ENCODE measurements at regions of chr12 and their contacts with region 1.

Region 1: GRCh38 chr12:100348657-100349454 is 8.0 kb upstream of the SLC17A8 start:
- DNase-seq: peak in 1 of 4 experiments; percentile 40
- ATAC-seq: peak; percentile 64
- H3K4me3 ChIP-seq: no peak overlapping the region
- H3K27ac ChIP-seq: no peak overlapping the region
- H3K4me1 ChIP-seq: no peaks in the 10 kb centered on the region
- H3K27me3 ChIP-seq: peaks cover 0 to 8% of the 10 kb centered on the region in 2 experiments; a peak in 2 of 5 replicates
- CTCF ChIP-seq: peak in 2 of 3 experiments; percentile 38 to 66; a peak in 3 of 6 replicates
- EP300 ChIP-seq: no peak
- POLR2A ChIP-seq: no peak
- RAD21 ChIP-seq: peak; percentile 67 to 75

Region 2: DNA sequence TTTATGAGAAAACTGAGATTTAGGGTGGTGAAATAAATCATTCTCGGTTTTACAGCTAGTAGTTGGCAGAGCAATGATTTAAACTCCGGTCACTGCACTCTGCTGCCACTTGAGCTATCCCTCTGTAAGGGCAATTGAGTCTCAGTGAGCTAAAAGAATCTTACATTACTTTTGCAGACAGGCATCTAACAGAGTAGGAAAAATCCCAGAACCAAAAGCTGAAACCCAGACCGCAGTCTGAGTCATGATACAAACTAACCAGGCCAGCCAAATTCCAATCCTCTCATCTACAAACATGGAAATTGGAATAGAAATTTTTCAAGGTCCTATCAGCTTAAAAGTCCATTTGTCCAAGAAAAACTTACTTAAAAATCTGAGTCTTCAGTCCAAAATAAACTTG is 437.8 kb before region 1 on chr12:
- CTCF ChIA-PET with region 1: no interaction called
- POLR2A ChIA-PET with region 1: no interaction called
- in situ Hi-C with region 1: no loop called
- intact Hi-C with region 1: no loop called
- DNase-seq: no peak
- ATAC-seq: no peak
- H3K4me3 ChIP-seq: no peak overlapping the region
- H3K27ac ChIP-seq: no peak overlapping the region
- H3K4me1 ChIP-seq: no peaks in the 10 kb centered on the region
- H3K27me3 ChIP-seq: no peaks in the 10 kb centered on the region
- CTCF ChIP-seq: no peak
- EP300 ChIP-seq: no peak
- POLR2A ChIP-seq: no peak
- RAD21 ChIP-seq: no peak

Region 3: GRCh38 chr12:100163416-100164152 is 185.3 kb before region 1 on chr12:
- CTCF ChIA-PET with region 1: no interaction called
- POLR2A ChIA-PET with region 1: no interaction called
- in situ Hi-C with region 1: no loop called
- intact Hi-C with region 1: no loop called
- DNase-seq: peak; percentile 54 to 80 (median 70)
- ATAC-seq: peak; percentile 100
- H3K4me3 ChIP-seq: no peak overlapping the region
- H3K27ac ChIP-seq: no peak overlapping the region
- H3K4me1 ChIP-seq: peaks cover 0 to 5% of the 10 kb centered on the region in 2 experiments; a peak in 3 of 5 replicates
- H3K27me3 ChIP-seq: peaks cover 5 to 10% of the 10 kb centered on the region in 2 experiments; a peak in 4 of 5 replicates
- CTCF ChIP-seq: peak in 2 of 3 experiments; percentile 3 to 27; a peak in 2 of 6 replicates
- EP300 ChIP-seq: no peak
- POLR2A ChIP-seq: no peak
- RAD21 ChIP-seq: peak in 1 of 2 experiments; percentile 27; a peak in 2 of 4 replicates

Region 4: DNA sequence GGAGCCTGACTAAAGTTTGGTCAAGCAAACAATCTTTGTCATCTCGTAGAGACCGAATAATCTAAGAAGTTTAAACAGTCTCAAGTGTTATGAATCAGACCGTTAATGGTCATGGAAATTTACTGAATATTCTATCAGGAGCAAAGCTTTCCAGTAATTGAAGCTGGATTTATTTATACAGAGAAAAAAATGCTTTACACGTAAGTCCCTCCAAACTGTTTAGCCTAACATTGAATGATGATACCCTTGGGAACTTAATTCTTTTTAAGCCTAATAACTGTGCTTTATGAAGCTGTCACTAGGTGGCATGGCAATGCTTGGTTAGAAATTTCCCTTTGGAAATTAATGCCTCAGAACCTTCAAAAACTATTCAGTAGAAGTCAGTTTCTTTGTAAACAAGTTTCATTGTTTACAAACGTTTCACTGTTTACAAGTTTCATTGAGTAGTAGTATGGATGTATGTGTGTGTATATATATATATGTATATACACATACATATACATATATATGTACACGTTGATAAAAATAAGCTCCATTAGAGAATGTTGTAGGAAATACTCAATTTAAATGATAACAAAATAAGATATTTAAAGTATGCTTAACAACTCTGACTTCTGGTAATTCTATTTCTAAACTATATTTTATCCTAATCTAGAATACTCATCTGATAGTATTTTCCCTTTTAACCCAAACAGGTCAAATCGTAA is 114.1 kb before region 1 on chr12:
- CTCF ChIA-PET with region 1: no interaction called
- POLR2A ChIA-PET with region 1: no interaction called
- in situ Hi-C with region 1: no loop called
- intact Hi-C with region 1: loop called (anchors 2 kb)
- DNase-seq: peak; percentile 20 to 52 (median 22)
- ATAC-seq: peak; percentile 87
- H3K4me3 ChIP-seq: no peak overlapping the region
- H3K27ac ChIP-seq: no peak overlapping the region
- H3K4me1 ChIP-seq: no peaks in the 10 kb centered on the region
- H3K27me3 ChIP-seq: no peaks in the 10 kb centered on the region
- CTCF ChIP-seq: peak; percentile 62 to 85 (median 66); a peak in 5 of 6 replicates
- EP300 ChIP-seq: no peak
- POLR2A ChIP-seq: no peak
- RAD21 ChIP-seq: peak; percentile 76 to 87

Region 5: GRCh38 chr12:100324498-100324897 is 24.4 kb before region 1 on chr12:
- CTCF ChIA-PET with region 1: no interaction called
- POLR2A ChIA-PET with region 1: no interaction called
- in situ Hi-C with region 1: no loop called
- intact Hi-C with region 1: no loop called
- DNase-seq: no peak
- ATAC-seq: no peak
- H3K4me3 ChIP-seq: no peak overlapping the region
- H3K27ac ChIP-seq: no peak overlapping the region
- H3K4me1 ChIP-seq: no peaks in the 10 kb centered on the region
- H3K27me3 ChIP-seq: no peaks in the 10 kb centered on the region
- CTCF ChIP-seq: no peak
- EP300 ChIP-seq: no peak
- POLR2A ChIP-seq: no peak
- RAD21 ChIP-seq: no peak

Region 6: DNA sequence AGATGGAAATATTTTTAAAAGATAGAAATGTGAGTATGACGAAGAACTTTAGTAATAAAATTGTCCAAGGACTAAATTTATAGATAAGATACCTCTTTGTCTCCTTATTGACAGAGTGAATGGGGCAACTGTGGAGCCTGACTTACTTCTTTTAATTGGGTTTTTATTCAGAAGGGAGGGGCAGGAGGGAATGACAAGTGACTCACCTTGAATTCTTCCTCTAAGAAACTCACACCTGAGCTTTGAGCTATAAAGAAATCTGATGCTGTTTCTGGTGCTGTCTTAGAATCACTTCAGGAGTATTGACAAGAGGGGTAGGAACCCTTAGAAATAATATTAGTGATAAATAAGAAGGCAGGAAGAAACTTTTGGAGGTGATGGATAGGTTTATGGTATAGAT is 125.8 kb after region 1 on chr12:
- CTCF ChIA-PET with region 1: no interaction called
- POLR2A ChIA-PET with region 1: no interaction called
- in situ Hi-C with region 1: no loop called
- intact Hi-C with region 1: loop called (anchors 5 kb)
- DNase-seq: no peak
- ATAC-seq: no peak
- H3K4me3 ChIP-seq: no peak overlapping the region
- H3K27ac ChIP-seq: no peak overlapping the region
- H3K4me1 ChIP-seq: no peaks in the 10 kb centered on the region
- H3K27me3 ChIP-seq: no peaks in the 10 kb centered on the region; a peak in 1 of 5 replicates
- CTCF ChIP-seq: no peak
- EP300 ChIP-seq: no peak
- POLR2A ChIP-seq: no peak
- RAD21 ChIP-seq: no peak

Region 7: DNA sequence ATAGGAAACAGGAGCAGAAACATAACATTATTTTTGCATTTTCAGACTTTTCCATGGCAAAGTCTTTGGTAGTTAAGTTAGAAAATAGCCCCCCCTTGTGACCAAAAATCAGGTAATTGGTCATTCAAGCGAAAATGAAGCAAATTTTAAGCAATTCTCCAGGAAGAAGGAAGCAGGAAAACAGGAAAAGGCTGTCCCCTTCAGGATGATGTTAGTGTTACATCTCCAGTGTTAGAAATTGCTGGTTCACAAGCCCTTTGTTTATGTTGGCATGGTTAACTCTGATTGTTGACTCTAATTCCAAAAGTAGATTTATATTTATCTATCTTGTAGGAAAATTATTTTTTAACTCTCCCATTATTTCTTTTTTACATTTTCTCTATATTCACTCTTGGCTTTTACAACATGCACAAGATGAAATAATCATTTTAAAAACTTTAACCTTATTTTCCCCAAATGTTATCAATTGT is 205.8 kb after region 1 on chr12:
- CTCF ChIA-PET with region 1: interaction called, 35 read pairs
- POLR2A ChIA-PET with region 1: no interaction called
- in situ Hi-C with region 1: loop called (anchors 10 kb)
- intact Hi-C with region 1: loop called (anchors 1 kb)
- DNase-seq: peak; percentile 53 to 79 (median 68)
- ATAC-seq: peak; percentile 95
- H3K4me3 ChIP-seq: no peak overlapping the region
- H3K27ac ChIP-seq: no peak overlapping the region
- H3K4me1 ChIP-seq: no peaks in the 10 kb centered on the region
- H3K27me3 ChIP-seq: no peaks in the 10 kb centered on the region
- CTCF ChIP-seq: peak; percentile 89 to 99 (median 91)
- EP300 ChIP-seq: no peak
- POLR2A ChIP-seq: no peak
- RAD21 ChIP-seq: peak; percentile 94 to 96

Region 8: GRCh38 chr12:100593490-100593889 is 244.6 kb after region 1 on chr12:
- CTCF ChIA-PET with region 1: no interaction called
- POLR2A ChIA-PET with region 1: no interaction called
- in situ Hi-C with region 1: no loop called
- intact Hi-C with region 1: no loop called
- DNase-seq: no peak
- ATAC-seq: no peak
- H3K4me3 ChIP-seq: no peak overlapping the region
- H3K27ac ChIP-seq: no peak overlapping the region
- H3K4me1 ChIP-seq: no peaks in the 10 kb centered on the region
- H3K27me3 ChIP-seq: no peaks in the 10 kb centered on the region
- CTCF ChIP-seq: no peak
- EP300 ChIP-seq: no peak
- POLR2A ChIP-seq: no peak
- RAD21 ChIP-seq: no peak

Region 9: GRCh38 chr12:100668945-100669536 is 320.2 kb after region 1 on chr12:
- CTCF ChIA-PET with region 1: no interaction called
- POLR2A ChIA-PET with region 1: no interaction called
- in situ Hi-C with region 1: loop called (anchors 10 kb)
- intact Hi-C with region 1: loop called (anchors 5 kb)
- DNase-seq: peak; percentile 63 to 71 (median 66)
- ATAC-seq: peak; percentile 96
- H3K4me3 ChIP-seq: no peak overlapping the region
- H3K27ac ChIP-seq: no peak overlapping the region
- H3K4me1 ChIP-seq: no peaks in the 10 kb centered on the region
- H3K27me3 ChIP-seq: no peaks in the 10 kb centered on the region
- CTCF ChIP-seq: peak; percentile 76 to 89 (median 76)
- EP300 ChIP-seq: no peak
- POLR2A ChIP-seq: no peak
- RAD21 ChIP-seq: peak; percentile 40 to 56

Region 10: DNA sequence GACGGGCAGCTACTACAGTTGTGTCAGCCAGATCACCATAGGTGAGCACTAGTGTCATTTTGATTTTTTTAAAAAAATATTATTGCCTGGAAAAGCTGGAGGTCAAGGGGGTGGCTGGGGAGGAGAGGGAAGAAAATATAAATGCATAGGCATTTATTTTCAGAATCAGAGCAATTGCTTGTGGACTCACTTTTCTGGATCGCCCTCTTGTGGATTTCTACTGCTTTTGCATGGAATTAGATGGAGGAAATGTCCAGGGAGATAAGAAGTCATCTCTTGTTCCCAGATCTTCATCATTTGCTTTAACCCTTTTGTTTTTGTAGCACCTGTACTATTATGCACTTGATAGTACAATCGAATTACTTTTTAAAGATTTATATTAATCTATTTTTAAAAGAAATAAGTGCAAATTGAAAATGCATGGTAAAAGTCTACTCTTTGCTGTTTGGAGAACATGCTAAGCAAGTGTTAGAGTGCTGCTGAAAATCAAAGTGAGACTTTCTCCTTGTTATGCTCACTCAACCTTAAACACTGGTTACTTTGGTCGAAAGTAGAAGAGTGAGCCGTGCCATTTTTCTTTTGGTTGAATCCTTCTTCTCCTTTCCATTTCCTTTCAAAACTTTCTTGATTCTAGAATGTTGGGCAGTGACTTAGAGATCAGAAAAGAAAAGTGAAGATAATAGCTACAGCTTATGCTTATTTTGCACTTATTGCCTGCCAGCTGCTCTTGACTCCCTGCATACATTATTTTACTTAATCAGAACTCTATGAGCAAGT is 385.1 kb after region 1 on chr12:
- CTCF ChIA-PET with region 1: interaction called, 7 read pairs
- POLR2A ChIA-PET with region 1: no interaction called
- in situ Hi-C with region 1: no loop called
- intact Hi-C with region 1: loop called (anchors 1 kb)
- DNase-seq: peak in 2 of 4 experiments; percentile 23 to 36
- ATAC-seq: peak; percentile 62; the same call in 1 of the 3 replicates
- H3K4me3 ChIP-seq: no peak overlapping the region
- H3K27ac ChIP-seq: no peak overlapping the region
- H3K4me1 ChIP-seq: no peaks in the 10 kb centered on the region
- H3K27me3 ChIP-seq: no peaks in the 10 kb centered on the region
- CTCF ChIP-seq: peak; percentile 49 to 56 (median 52); a peak in 5 of 6 replicates
- EP300 ChIP-seq: no peak
- POLR2A ChIP-seq: no peak
- RAD21 ChIP-seq: peak; percentile 27 to 42; a peak in 3 of 4 replicates